Heart right ventricle (tissue), 16 donors: ENCODE measurements at regions of chr5 and their contacts with region 1.

Region 1: GRCh38 chr5:132829742-132830435 is 558 bp downstream of the SHROOM1 start:
- DNase-seq: peak; percentile 78 to 80
- ATAC-seq: peak; percentile 88 to 94 (median 90)
- H3K4me3 ChIP-seq: peak overlapping the region; percentile 46 to 89 (median 77)
- H3K27ac ChIP-seq: peak overlapping the region; percentile 55 to 92 (median 86)
- H3K4me1 ChIP-seq: peaks cover 6 to 33% (median 19%) of the 10 kb centered on the region in 9 donors
- H3K27me3 ChIP-seq: peaks cover 0 to 62% (median 0%) of the 10 kb centered on the region in 7 donors
- CTCF ChIP-seq: peak in 8 of 9 donors; percentile 88 to 98 (median 93)

Region 2: DNA sequence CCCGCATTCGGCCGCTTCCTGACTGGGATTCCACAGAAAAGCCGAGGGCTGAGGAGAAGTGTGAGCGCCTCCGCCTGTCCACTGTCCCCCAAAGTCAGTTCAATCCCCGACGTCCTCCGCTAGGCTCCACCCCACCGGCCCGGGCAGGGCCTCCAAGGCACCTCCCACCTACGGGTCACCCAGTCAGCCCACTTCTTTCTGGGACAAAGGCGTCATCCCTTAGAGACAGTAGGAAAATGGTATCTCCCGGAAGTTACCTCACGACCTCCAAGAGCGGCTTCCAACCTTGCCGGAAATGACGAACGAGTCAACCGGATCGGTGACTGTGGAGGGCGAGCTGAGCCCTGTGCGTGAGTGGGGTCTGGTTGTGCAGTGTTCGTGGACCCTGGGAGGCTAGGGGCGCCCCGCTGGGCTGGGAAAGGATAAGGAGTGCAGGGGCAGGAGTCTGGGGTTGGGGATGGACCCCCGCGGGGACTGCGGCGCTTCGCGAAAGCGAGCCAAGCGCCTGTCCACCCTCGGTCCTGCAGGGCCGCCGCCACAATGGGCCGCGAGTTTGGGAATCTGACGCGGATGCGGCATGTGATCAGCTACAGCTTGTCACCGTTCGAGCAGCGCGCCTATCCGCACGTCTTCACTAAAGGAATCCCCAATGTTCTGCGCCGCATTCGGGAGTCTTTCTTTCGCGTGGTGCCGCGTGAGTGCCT is 36.6 kb after region 1 on chr5 and contains the starts of genes GDF9 and UQCRQ:
- intact Hi-C with region 1: loop called in 8 of 10 experiments (anchors 2 to 5 kb)
- DNase-seq: peak; percentile 93 to 99
- ATAC-seq: peak; percentile 98 to 100 (median 99)
- H3K4me3 ChIP-seq: peak within 1 kb of the TSS; percentile 55 to 97 (median 84)
- H3K27ac ChIP-seq: peak within 1 kb of the TSS; percentile 85 to 98 (median 96)
- H3K4me1 ChIP-seq: peaks cover 5 to 37% (median 23%) of the 10 kb centered on the region in 9 donors
- H3K27me3 ChIP-seq: no peaks in the 10 kb centered on the region
- CTCF ChIP-seq: peak in 6 of 9 donors; percentile 22 to 59 (median 47)
- total RNA-seq, gene GDF9: 0.18 to 0.82 (median 0.43) TPM
- total RNA-seq, gene UQCRQ: 1,190 to 1,962 (median 1,754) TPM

Region 3: GRCh38 chr5:132896685-132897084 is 66.8 kb after region 1 on chr5:
- intact Hi-C with region 1: no loop called
- DNase-seq: no peak
- ATAC-seq: peak in 3 of 8 donors; percentile 8 to 40 (median 33)
- H3K4me3 ChIP-seq: no peak overlapping the region
- H3K27ac ChIP-seq: peak overlapping the region in 2 of 10 donors; percentile 57 to 63
- H3K4me1 ChIP-seq: peaks cover 0 to 29% (median 12%) of the 10 kb centered on the region in 9 donors
- H3K27me3 ChIP-seq: no peaks in the 10 kb centered on the region
- CTCF ChIP-seq: no peak

Region 4: DNA sequence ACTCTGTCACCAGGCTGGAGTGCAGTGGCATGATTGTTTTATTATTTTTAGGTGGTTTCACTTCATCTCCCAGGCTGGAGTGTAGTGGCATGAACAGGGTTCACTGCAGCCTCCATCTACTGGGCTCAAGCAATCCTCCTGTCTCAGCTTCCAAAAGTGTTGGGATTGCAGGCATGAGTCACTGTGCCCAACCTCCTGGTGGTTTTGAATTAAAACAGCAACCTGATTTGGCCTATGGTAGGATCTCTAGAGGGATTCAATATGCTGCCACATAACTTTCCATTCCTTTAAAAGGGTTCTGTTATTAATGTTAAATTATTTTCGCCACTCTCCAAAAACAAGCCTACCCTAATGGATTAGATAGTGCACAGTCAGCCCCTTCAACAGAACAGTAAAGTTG is 212.0 kb after region 1 on chr5:
- intact Hi-C with region 1: loop called in 1 of 10 experiments (anchors 10 kb)
- DNase-seq: no peak
- ATAC-seq: no peak
- H3K4me3 ChIP-seq: no peak overlapping the region
- H3K27ac ChIP-seq: no peak overlapping the region
- H3K4me1 ChIP-seq: no peaks in the 10 kb centered on the region
- H3K27me3 ChIP-seq: no peaks in the 10 kb centered on the region
- CTCF ChIP-seq: no peak